ENCODE measurements at regions of chr1 and their contacts with region 1.

Region 1: DNA sequence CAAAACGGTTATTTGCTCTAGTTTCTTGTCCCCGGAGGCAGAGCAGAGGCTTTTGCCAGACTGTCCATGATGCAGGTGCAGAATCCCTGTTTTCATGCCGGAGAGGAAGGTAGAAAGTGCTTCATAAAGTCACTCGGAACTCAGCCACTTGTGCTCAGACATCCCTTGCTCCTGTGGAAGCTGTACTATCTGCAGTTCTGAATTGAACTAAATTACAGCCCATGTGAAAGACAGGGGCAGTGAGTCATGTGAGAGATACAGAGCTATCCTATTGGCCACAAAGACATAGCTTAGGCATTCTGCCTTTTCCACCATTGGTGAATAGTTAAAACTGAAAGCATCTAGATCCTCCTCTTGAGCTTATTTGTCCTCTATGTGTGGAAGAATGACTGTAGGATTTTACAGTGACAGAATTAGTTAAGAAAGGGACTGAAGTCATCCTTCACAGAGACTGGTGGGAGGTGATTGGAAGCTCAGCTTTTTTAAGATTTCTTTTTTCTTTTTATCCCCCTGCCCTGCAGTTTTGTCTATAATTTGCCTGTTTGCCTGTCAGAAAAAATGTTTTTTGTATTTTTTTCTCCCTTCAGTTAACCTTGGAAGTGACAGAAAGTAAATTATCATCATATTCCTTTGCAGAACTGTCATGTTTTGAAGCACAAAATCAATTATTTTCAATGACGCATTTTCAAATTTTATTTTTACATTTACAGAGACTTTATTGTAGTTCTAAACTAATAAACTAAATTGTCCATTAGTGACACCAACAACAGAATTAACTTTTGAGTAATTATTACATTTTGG is 298.6 kb downstream of the PTPRC start:
- DNase-seq: peak; percentile 95
- ATAC-seq: peak; percentile 90
- H3K4me3 ChIP-seq: peak overlapping the region; percentile 89
- H3K27ac ChIP-seq: peak overlapping the region; percentile 92
- H3K4me1 ChIP-seq: no peaks in the 10 kb centered on the region; the same call in 1 of the 2 replicates
- H3K27me3 ChIP-seq: no peaks in the 10 kb centered on the region
- CTCF ChIP-seq: no peak
- POLR2A ChIP-seq: peak; percentile 95
- RAD21 ChIP-seq: 0 out of 2 replicates have a peak, but pooled peaks have one; percentile 18

Region 2: DNA sequence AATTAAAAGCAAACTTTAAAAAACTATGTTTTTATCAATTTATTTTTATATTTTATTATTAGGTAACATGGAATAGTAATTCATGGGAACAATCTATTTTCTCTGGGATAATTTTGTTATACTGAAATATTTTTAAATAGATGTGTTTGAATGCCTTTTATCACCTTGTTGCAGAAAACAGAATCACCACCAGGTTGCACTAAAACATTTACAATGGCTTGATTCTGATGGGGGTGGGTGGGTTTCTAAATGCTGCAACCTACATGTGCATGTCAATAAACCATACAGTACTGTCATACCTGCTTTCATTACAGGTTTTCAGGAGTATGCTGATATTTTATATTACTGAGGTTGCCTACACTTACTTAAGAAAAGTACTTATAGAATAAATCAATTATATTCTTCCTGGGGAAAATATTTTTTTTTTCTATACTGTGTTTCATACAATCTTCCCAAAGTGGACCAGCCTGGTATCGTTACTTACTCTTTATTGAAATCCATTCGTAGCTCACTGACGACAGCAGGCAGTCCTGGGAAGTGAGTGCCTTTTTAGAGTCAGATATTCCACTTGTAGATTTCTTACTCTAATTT is 165.8 kb before region 1 on chr1:
- CTCF ChIA-PET with region 1: no interaction called
- POLR2A ChIA-PET with region 1: no interaction called
- dilution Hi-C with region 1: no loop called
- in situ Hi-C with region 1: no loop called
- intact Hi-C with region 1: loop called (anchors 5 kb)
- DNase-seq: peak; percentile 56
- ATAC-seq: no peak; the same call in 1 of the 2 replicates
- H3K4me3 ChIP-seq: no peak overlapping the region
- H3K27ac ChIP-seq: no peak overlapping the region
- H3K4me1 ChIP-seq: peaks cover 3% of the 10 kb centered on the region; the same call in 1 of the 2 replicates
- H3K27me3 ChIP-seq: no peaks in the 10 kb centered on the region
- CTCF ChIP-seq: peak; percentile 64
- POLR2A ChIP-seq: no peak
- RAD21 ChIP-seq: peak; percentile 86

Region 3: GRCh38 chr1:199083680-199084079 is 146.2 kb after region 1 on chr1:
- CTCF ChIA-PET with region 1: no interaction called
- POLR2A ChIA-PET with region 1: no interaction called
- dilution Hi-C with region 1: no loop called
- in situ Hi-C with region 1: no loop called
- intact Hi-C with region 1: loop called (anchors 1 kb)
- DNase-seq: peak; percentile 75
- ATAC-seq: peak; percentile 67
- H3K4me3 ChIP-seq: no peak overlapping the region
- H3K27ac ChIP-seq: peak overlapping the region; percentile 52; the same call in 1 of the 2 replicates
- H3K4me1 ChIP-seq: peaks cover 6% of the 10 kb centered on the region
- H3K27me3 ChIP-seq: no peaks in the 10 kb centered on the region
- CTCF ChIP-seq: no peak
- POLR2A ChIP-seq: no peak
- RAD21 ChIP-seq: no peak

Region 4: GRCh38 chr1:199243423-199244061 is 306.1 kb after region 1 on chr1:
- CTCF ChIA-PET with region 1: no interaction called
- POLR2A ChIA-PET with region 1: no interaction called
- dilution Hi-C with region 1: no loop called
- in situ Hi-C with region 1: no loop called
- intact Hi-C with region 1: loop called (anchors 1 kb)
- DNase-seq: peak; percentile 43
- ATAC-seq: peak; percentile 85
- H3K4me3 ChIP-seq: no peak overlapping the region
- H3K27ac ChIP-seq: no peak overlapping the region
- H3K4me1 ChIP-seq: no peaks in the 10 kb centered on the region
- H3K27me3 ChIP-seq: no peaks in the 10 kb centered on the region
- CTCF ChIP-seq: peak; percentile 64
- POLR2A ChIP-seq: no peak
- RAD21 ChIP-seq: peak; percentile 79

Region 5: GRCh38 chr1:199463521-199464128 is 526.2 kb after region 1 on chr1:
- CTCF ChIA-PET with region 1: no interaction called
- POLR2A ChIA-PET with region 1: no interaction called
- dilution Hi-C with region 1: no loop called
- in situ Hi-C with region 1: no loop called
- intact Hi-C with region 1: loop called (anchors 2 kb)
- DNase-seq: peak; percentile 82
- ATAC-seq: peak; percentile 92
- H3K4me3 ChIP-seq: no peak overlapping the region
- H3K27ac ChIP-seq: no peak overlapping the region
- H3K4me1 ChIP-seq: no peaks in the 10 kb centered on the region; the same call in 1 of the 2 replicates
- H3K27me3 ChIP-seq: no peaks in the 10 kb centered on the region
- CTCF ChIP-seq: peak; percentile 71
- POLR2A ChIP-seq: no peak
- RAD21 ChIP-seq: peak; percentile 89